ENCODE measurements at regions of chr2 and their contacts with region 1.

Region 1: DNA sequence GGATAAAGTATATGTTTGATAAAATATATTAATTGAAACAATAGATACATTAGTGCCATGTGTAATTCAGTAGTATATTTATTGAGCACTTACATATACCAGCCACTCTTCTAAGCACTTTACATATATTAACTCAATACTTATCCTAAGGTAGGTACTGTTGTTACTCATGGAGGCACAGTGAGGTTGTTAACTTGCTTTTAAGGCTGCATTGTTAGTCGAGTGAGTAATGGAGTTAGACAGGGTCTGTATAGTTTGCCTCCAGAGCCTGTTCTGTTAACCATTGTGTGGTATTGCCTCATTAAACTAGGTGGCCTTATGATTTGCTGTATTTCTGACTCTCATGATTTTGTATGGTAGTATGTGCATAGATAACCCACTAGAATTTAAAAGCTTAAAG is 44.2 kb downstream of the LCLAT1 start:
- DNase-seq: no peak
- ATAC-seq: no peak

Region 2: GRCh38 chr2:30455114-30455738 is 36.0 kb before region 1 on chr2:
- intact Hi-C with region 1: loop called (anchors 2 kb)
- DNase-seq: no peak
- ATAC-seq: no peak

Region 3: DNA sequence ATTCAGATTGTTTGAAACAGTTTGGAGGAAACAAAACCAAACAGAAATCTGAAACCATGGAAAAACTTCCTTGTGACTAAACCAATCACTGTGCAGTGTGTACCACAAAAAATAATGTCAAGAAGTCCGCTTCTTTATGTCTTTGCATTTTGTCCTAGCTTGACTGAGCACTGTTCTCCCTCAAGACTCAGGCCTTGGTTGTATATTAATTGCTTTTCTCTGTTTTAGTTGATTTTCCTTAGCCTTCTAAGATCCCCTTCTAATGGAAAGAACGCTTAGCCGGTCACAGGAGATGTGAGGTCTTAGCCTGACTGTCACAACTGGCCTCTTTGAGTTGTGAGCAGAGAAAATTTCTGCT is 12.4 kb after region 1 on chr2:
- intact Hi-C with region 1: loop called (anchors 2 kb)
- DNase-seq: no peak
- ATAC-seq: no peak

Region 4: DNA sequence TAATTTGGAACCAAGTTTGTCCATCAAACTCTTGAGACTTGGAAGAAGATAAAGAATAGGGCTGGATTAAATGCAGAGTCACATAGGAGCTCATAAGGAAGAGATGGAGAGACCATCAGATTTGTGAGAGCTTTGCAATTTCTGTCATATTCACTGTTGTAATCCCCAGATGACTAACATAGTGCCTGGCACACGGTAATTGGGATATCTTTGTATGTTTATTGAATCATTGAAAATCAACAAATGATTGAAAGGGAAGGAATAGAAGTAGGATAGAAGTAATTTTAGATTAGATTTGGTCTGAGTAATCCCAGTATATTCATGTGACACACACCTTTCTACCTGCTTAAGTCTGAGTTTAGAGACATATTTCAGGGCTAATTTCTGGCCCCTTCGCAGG is 31.2 kb after region 1 on chr2:
- intact Hi-C with region 1: no loop called
- DNase-seq: no peak
- ATAC-seq: no peak

Region 5: GRCh38 chr2:30711646-30712085 is 220.4 kb after region 1 on chr2:
- intact Hi-C with region 1: no loop called
- DNase-seq: peak; percentile 79
- ATAC-seq: peak; percentile 79

Measured in Right ventricle myocardium inferior (tissue), 1 donor.